A549 (cell line): ENCODE measurements at regions of chr19 and their contacts with region 1.

Region 1: GRCh38 chr19:7970716-7971448 is 27.4 kb upstream of the TIMM44 start:
- DNase-seq: peak; percentile 37 to 39
- ATAC-seq: peak; percentile 86 to 87
- H3K4me3 ChIP-seq: no peak overlapping the region
- H3K27ac ChIP-seq: no peak overlapping the region
- H3K4me1 ChIP-seq: no peaks in the 10 kb centered on the region
- CTCF ChIP-seq: peak; percentile 65
- EP300 ChIP-seq: no peak
- POLR2A ChIP-seq: no peak
- RAD21 ChIP-seq: peak; percentile 67 to 74

Region 2: DNA sequence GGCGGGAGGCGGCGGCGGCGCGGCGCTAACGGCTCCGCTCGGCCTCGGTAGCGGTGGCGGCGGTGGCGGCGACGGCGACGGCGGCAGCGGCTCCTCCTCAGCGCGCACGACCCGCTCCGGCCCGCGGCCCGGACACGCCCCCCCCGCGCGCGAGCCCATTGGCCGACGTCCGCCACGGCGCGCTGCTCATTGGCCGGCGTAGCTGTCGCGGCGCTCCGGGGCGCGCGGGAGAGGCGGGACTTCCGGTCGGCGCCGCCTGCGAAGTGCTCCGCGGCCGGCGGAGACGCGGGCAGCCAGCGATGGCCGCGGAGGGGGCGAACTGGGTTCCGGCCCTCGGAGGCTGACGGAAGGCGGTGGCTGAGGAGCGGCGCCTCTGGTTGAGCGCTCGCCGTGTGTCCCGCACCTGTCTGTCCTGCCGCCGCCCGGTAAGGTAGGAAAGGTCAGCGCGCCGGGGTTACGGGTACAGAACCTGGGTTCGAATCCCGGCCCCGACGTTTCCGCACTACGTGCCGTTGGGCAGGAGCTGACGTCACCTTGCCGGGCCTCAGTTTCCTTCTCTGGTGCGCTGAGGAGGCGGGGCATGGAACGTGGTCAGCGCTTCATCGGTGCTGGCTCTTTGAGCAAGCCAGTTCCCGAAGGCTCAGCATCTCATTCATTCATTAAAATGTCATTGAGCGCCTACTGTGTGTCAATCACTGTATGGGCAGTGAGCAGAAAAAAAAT is 34.8 kb after region 1 on chr19 and contains the start of gene ELAVL1:
- CTCF ChIA-PET with region 1: interaction called, 21 read pairs
- POLR2A ChIA-PET with region 1: interaction called, 3 read pairs
- DNase-seq: peak; percentile 64 to 88
- ATAC-seq: peak; percentile 87 to 90
- H3K4me3 ChIP-seq: peak within 1 kb of the TSS; percentile 58
- H3K27ac ChIP-seq: peak within 1 kb of the TSS; percentile 89 to 99
- H3K4me1 ChIP-seq: peaks cover 19% of the 10 kb centered on the region
- CTCF ChIP-seq: no peak
- EP300 ChIP-seq: no peak
- POLR2A ChIP-seq: peak; percentile 81
- RAD21 ChIP-seq: no peak
- polyA plus RNA-seq, gene ELAVL1: 39.3 and 44.4 TPM in 2 replicates